CD4-positive, alpha-beta T cell (primary cell): ENCODE measurements at regions of chr7 and their contacts with region 1.

Region 1: DNA sequence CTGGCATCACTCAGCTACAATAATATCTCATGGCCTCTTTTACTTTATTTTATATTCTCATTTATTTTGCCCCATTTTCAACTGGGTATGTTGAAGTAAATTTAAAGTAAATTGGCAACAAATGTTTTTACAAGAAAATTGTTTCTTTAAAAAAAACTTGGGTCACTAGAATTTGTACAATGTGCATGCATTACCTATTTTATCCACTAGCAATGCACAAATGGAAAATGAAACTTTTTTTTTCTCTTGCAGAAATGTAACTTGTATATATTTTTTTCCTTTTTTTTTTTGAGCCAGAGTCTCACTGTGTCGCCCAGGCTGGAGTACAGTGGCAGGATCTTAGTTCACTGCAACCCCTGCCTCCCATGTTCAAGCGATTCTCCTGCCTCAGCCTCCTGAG is 10.3 kb upstream of the H2AZ2 start:
- DNase-seq: no peak
- ATAC-seq: no peak
- H3K4me3 ChIP-seq: no peak overlapping the region
- H3K4me3 Mint-ChIP-seq: no peak overlapping the region
- H3K27ac ChIP-seq: no peak overlapping the region
- H3K27ac Mint-ChIP-seq: no peak overlapping the region
- H3K4me1 ChIP-seq: peaks cover 6% of the 10 kb centered on the region
- H3K4me1 Mint-ChIP-seq: peaks cover 6% of the 10 kb centered on the region
- H3K27me3 ChIP-seq: no peaks in the 10 kb centered on the region
- H3K27me3 Mint-ChIP-seq: peaks cover 5% of the 10 kb centered on the region
- CTCF ChIP-seq: no peak

Region 2: GRCh38 chr7:44921607-44922359 is 63.6 kb after region 1 on chr7:
- CTCF ChIA-PET with region 1: interaction called, 12 read pairs
- POLR2A ChIA-PET with region 1: no interaction called
- intact Hi-C with region 1: loop called (anchors 1 kb)
- DNase-seq: peak; percentile 88 to 98 (median 94)
- ATAC-seq: peak; percentile 98
- H3K4me3 ChIP-seq: no peak overlapping the region
- H3K4me3 Mint-ChIP-seq: no peak overlapping the region
- H3K27ac ChIP-seq: no peak overlapping the region
- H3K27ac Mint-ChIP-seq: no peak overlapping the region
- H3K4me1 ChIP-seq: peaks cover 9% of the 10 kb centered on the region
- H3K4me1 Mint-ChIP-seq: peaks cover 4% of the 10 kb centered on the region
- H3K27me3 ChIP-seq: no peaks in the 10 kb centered on the region
- H3K27me3 Mint-ChIP-seq: peaks cover 1% of the 10 kb centered on the region
- CTCF ChIP-seq: peak; percentile 85

Region 3: GRCh38 chr7:45259966-45260646 is 401.9 kb after region 1 on chr7:
- CTCF ChIA-PET with region 1: no interaction called
- POLR2A ChIA-PET with region 1: no interaction called
- intact Hi-C with region 1: loop called in 1 of 2 experiments (anchors 5 kb)
- DNase-seq: peak; percentile 35 to 77 (median 61)
- ATAC-seq: peak; percentile 54
- H3K4me3 ChIP-seq: no peak overlapping the region
- H3K4me3 Mint-ChIP-seq: no peak overlapping the region
- H3K27ac ChIP-seq: no peak overlapping the region
- H3K27ac Mint-ChIP-seq: no peak overlapping the region
- H3K4me1 ChIP-seq: peaks cover 8% of the 10 kb centered on the region
- H3K4me1 Mint-ChIP-seq: no peaks in the 10 kb centered on the region
- H3K27me3 ChIP-seq: peaks cover 3 to 6% of the 10 kb centered on the region in 2 experiments
- H3K27me3 Mint-ChIP-seq: peaks cover 35% of the 10 kb centered on the region
- CTCF ChIP-seq: peak; percentile 98